GM10248 (cell line): ENCODE measurements at regions of chr5 and their contacts with region 1.

Region 1: DNA sequence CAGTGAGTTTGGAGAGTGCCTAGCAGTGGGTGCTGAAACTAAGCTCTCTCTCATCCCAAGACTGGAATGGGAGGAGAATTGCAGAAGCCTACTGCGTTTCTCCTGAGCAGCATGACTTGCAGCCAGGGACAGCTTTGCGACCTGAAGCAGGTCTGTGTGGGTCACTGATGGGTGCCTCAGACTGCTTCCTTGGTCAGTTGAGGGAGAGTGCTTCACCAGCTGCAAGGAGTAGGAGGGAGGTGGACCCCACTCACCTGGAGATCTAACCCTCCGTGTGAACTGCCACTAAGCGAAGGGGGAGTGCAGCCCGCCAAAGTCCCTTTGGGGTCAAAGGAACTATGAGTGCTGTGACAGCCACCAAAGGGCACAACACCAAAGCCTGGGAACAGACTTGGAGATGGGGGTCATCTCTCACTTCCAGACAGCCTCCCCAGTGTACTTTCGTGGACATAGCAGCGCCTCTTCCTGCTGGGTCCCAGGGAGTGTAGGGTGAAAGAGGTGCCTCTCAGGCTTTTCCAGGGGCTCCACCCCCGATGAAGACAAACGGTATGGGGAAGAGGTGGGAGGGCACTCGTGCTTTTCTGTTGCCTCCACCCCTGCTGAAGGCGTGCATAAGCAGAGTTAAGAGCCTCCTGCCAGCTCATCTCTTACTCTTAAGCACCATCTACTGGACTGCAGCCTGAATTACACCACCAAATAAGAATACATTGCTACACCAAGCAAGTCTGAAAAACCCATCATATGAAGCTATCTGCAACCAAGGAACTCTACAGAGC is 34.3 kb upstream of the MACIR start:
- DNase-seq: peak; percentile 42
- CTCF ChIP-seq: peak; percentile 86

Region 2: DNA sequence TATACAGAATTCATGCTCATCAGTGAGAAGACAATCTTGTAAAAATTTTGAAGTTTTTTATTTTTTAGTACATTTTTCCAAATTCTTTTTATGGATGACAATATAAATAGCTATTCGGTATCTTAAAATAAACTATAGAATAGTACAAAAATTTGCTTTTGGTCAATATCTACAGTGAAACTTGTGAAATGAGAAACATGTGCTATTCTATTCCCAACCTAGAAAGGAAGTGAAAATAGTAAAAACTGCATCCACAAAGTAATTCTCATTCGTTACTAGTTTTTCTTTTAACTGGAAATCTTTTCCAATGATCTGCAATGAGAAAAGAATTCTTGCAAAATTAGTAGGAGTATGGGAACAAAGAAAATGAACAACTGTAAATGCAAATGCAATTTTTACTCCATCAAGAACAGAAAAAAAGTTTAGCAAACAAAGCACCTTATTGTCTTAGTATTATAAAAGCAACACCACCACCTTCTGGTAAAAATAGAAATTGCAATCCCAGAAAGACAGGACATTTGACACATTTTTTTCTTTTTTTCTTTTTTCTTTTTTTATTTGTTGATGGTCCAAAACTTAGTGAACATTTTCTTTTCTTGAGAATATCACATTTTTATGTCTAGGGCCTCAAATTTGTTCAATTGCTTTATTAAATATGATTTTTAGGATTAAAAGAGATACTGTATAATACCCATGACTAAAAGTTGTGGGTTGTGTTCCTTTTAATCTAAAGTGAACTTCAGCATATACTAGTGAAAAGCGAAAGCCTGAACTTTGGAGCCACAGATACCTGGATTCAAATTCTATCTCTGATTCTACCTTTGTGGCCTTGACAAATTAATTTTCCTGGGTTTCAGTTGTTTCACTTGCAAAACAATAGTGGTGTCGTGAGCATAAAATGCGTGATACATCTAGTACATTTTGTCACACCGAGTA is 1000.5 kb before region 1 on chr5:
- CTCF ChIA-PET with region 1: no interaction called
- POLR2A ChIA-PET with region 1: no interaction called
- DNase-seq: peak; percentile 18
- CTCF ChIP-seq: peak; percentile 67

Region 3: GRCh38 chr5:102681407-102681983 is 542.8 kb before region 1 on chr5:
- CTCF ChIA-PET with region 1: interaction called, 27 read pairs
- POLR2A ChIA-PET with region 1: no interaction called
- DNase-seq: peak; percentile 52
- CTCF ChIP-seq: peak; percentile 85

Region 4: GRCh38 chr5:103211576-103212561 is 12.4 kb before region 1 on chr5:
- CTCF ChIA-PET with region 1: interaction called, 86 read pairs
- POLR2A ChIA-PET with region 1: no interaction called
- DNase-seq: no peak
- CTCF ChIP-seq: no peak

Region 5: DNA sequence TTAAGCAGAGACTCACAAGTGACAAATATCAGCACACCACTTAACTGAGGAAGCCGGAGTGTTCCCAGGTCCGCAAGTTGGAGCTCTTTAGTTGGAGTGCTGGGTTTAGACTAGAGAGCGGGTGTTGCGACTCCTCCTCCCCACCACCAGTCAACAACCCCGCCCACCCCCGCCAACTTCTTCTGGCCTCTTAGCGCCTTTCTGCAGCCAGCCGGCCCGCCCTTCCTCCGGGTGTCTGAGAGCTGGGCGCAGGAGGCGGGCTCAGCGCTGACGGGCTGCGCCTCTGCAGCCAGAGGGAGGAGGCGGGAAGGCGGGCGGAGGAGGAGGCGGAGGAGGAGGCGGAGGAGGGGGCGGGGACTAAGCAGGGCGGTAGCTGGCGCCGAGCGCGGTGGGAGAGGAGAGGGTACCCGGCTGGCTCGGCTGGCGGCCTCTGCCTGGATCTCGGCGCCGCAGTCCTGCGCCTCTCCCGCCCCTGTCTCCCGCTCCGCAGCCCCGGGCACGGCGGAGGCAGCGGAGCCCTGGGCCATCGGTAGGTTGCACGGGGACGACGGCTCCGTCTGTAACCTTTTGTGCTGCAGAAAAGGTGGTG is 34.2 kb after region 1 on chr5 and contains the start of gene MACIR:
- CTCF ChIA-PET with region 1: interaction called, 15 read pairs
- POLR2A ChIA-PET with region 1: no interaction called
- DNase-seq: peak; percentile 91
- CTCF ChIP-seq: no peak